ENCODE measurements at regions of chr10 and their contacts with region 1.

Region 1: GRCh38 chr10:84224411-84225028 is 824 bp downstream of the LRIT2 start:
- DNase-seq: no peak
- ATAC-seq: no peak
- H3K4me3 ChIP-seq: no peak overlapping the region
- H3K27ac ChIP-seq: no peak overlapping the region
- H3K4me1 ChIP-seq: no peaks in the 10 kb centered on the region
- H3K27me3 ChIP-seq: no peaks in the 10 kb centered on the region
- CTCF ChIP-seq: no peak
- EP300 ChIP-seq: no peak
- POLR2A ChIP-seq: no peak
- RAD21 ChIP-seq: no peak

Region 2: GRCh38 chr10:84256510-84257342 is 32.2 kb after region 1 on chr10:
- CTCF ChIA-PET with region 1: no interaction called
- POLR2A ChIA-PET with region 1: no interaction called
- in situ Hi-C with region 1: no loop called
- intact Hi-C with region 1: loop called (anchors 1 kb)
- DNase-seq: peak; percentile 22
- ATAC-seq: peak; percentile 82
- H3K4me3 ChIP-seq: peak overlapping the region in 1 of 3 experiments; percentile 50; a peak in 1 of 6 replicates
- H3K27ac ChIP-seq: no peak overlapping the region
- H3K4me1 ChIP-seq: peaks cover 9% of the 10 kb centered on the region
- H3K27me3 ChIP-seq: peaks cover 0 to 6% of the 10 kb centered on the region in 2 experiments; a peak in 2 of 5 replicates
- CTCF ChIP-seq: peak; percentile 74
- EP300 ChIP-seq: no peak
- POLR2A ChIP-seq: no peak
- RAD21 ChIP-seq: no peak

Region 3: GRCh38 chr10:84397735-84398144 is 173.2 kb after region 1 on chr10:
- CTCF ChIA-PET with region 1: no interaction called
- POLR2A ChIA-PET with region 1: no interaction called
- in situ Hi-C with region 1: no loop called
- intact Hi-C with region 1: no loop called
- DNase-seq: no peak
- ATAC-seq: no peak
- H3K4me3 ChIP-seq: no peak overlapping the region
- H3K27ac ChIP-seq: no peak overlapping the region
- H3K4me1 ChIP-seq: peaks cover 7% of the 10 kb centered on the region
- H3K27me3 ChIP-seq: no peaks in the 10 kb centered on the region
- CTCF ChIP-seq: no peak
- EP300 ChIP-seq: no peak
- POLR2A ChIP-seq: no peak
- RAD21 ChIP-seq: no peak

Region 4: DNA sequence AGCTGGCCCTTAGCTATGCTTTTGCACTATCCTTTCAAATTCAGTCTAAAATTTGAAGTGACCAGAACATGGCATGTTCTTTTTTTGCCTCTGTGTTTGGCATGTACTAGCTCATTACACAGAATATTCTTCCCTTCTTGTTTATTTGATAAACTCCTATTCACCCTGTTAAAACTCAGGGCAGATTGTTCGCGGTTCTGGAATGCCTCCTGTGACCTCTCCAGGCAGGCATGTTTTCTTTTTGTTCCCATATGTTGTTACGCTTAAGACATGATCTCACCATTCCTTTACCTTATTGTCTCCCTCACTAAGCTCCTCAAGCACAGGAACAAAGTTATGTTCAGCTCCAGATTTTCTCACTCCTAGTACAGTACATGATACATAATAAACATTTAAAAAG is 285.6 kb after region 1 on chr10:
- CTCF ChIA-PET with region 1: no interaction called
- POLR2A ChIA-PET with region 1: no interaction called
- in situ Hi-C with region 1: no loop called
- intact Hi-C with region 1: no loop called
- DNase-seq: no peak
- ATAC-seq: no peak
- H3K4me3 ChIP-seq: no peak overlapping the region
- H3K27ac ChIP-seq: no peak overlapping the region
- H3K4me1 ChIP-seq: no peaks in the 10 kb centered on the region; the same call in 1 of the 2 replicates
- H3K27me3 ChIP-seq: no peaks in the 10 kb centered on the region
- CTCF ChIP-seq: no peak
- EP300 ChIP-seq: no peak
- POLR2A ChIP-seq: no peak
- RAD21 ChIP-seq: no peak

Measured in HepG2 (cell line).